ENCODE measurements at regions of chr1 and their contacts with region 1.

Region 1: DNA sequence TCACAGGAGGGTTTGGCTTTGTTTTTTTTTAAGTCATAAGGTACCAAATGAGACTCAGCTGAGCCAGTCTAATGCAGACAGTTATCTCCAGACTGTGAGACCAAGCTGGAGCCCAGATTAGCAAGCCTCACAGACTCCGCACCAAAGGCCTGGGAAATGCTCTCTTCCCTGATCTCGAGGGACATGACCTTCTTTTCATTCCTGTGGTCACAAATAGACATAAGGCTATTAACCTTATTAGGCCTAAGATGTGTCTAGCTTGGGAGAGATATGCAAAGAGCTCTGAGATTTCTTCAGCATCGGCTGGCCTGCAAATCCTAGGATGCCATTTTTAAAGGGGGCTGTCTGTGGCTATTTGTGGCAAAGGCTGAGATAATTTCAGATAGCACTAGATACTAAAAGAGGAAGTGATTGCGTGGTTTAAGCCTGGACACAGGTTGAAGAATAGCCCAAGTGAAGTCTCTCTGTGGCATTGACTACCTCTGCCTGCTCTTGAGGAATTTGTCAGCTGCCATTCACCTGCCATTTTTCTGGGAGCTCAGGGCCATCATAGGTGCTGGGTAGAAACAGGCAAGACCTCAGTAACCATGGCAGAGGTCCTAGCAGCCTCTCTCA is 301.3 kb downstream of the SIPA1L2 start:
- DNase-seq: no peak
- ATAC-seq: no peak

Region 2: GRCh38 chr1:232074265-232074664 is 254.3 kb before region 1 on chr1:
- intact Hi-C with region 1: no loop called
- DNase-seq: no peak
- ATAC-seq: no peak

Region 3: GRCh38 chr1:232351335-232351734 is 22.7 kb after region 1 on chr1:
- intact Hi-C with region 1: loop called (anchors 1 kb)
- DNase-seq: no peak
- ATAC-seq: no peak

Region 4: DNA sequence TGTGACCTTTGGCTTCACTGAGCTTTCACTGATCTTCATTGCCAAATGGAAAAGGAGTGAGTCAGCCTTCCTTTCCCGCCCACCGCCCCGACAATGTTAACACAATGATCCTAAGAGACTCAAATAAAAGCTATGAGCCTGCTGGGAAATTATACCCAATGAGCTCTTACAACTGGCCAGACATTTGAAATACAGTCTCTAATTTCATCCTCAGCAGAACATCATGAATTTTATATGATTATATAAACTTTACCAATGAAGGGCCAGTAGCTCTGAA is 48.8 kb after region 1 on chr1:
- intact Hi-C with region 1: no loop called
- DNase-seq: peak; percentile 73
- ATAC-seq: peak; percentile 62

Region 5: GRCh38 chr1:233355841-233356704 is 1027.5 kb after region 1 on chr1:
- intact Hi-C with region 1: loop called (anchors 5 kb)
- DNase-seq: no peak
- ATAC-seq: no peak

Measured in sciatic nerve (tissue), 2 donors.